Sciatic nerve (tissue), 2 donors: ENCODE measurements at regions of chr2 and their contacts with region 1.

Region 1: DNA sequence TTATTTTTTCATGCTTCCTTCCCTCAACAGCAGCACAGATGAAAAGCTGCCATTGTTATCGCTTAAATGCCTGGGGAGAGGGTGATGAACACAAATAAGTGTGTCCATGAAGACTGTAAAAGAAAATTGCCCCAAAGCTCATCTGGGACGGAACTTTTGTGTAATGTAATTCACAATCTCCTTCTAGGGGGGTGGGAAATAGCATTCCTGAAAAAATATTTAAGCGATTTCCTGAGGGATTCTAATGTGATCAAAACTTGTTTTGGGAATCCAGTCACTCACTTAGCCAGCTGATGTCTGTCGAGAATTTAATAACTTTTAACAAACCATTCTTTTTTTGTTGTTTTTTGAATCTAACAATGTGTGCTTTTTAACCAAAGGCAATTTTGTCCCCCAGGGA is 427.9 kb downstream of the PLCL1 start:
- DNase-seq: no peak
- ATAC-seq: no peak

Region 2: DNA sequence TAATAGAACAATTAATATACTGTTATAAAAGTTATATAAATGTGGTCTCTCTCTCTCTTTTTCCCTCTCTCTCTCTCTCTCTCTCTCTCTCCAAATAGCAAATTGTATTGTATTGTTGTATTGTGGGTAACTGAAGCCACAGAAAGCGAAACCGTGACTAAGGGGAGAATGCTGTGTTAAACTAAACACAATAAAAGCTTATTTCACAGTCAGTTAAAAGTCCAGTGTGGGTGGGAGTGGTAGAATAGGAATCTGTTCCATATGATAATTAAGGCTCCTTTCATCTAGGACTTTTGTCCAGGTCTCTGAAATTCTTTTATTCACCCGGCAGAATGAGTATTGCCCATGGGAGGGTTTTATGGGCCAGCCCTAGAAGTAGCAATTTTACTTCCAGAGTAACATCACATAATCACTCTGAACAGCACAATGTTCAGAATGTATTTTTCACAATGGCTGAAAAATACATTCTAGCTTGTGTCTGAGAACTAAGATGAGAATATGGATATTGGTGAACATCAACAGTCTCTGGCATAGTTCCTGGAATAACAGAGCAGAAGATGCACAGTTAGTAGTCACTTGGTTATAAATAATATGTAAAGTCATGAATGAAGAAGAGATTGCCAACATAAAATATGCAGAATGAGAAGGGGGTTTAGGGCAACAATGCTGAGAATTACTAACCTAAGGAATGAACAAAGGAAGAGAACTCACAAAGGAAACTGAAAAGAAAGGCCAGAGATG is 28.8 kb before region 1 on chr2:
- intact Hi-C with region 1: loop called (anchors 1 kb)
- DNase-seq: no peak
- ATAC-seq: no peak